PC-9 (cell line): ENCODE measurements at regions of chr15 and their contacts with region 1.

Region 1: DNA sequence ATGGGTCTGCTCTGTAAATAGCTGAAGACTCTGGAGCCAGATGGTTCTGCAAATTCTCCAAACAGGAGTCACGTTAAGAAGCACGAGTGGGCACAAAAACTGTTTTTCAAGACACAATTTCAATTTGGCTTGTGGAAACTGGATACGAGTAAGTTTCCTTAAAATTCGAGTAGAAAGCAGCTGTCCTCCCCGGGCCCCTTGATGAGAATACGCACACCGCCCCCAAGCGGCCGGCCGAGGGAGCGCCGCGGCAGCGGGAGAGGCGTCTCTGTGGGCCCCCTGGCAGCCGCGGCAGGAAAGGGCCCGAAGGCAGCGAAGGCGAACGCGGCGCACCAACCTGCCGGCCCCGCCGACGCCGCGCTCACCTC is 778 bp upstream of the THBS1 start:
- DNase-seq: peak; percentile 60 to 94
- H3K4me3 ChIP-seq: peak overlapping the region; percentile 70
- H3K27ac ChIP-seq: peak overlapping the region; percentile 62
- H3K4me1 ChIP-seq: peaks cover 22% of the 10 kb centered on the region; the same call in 1 of the 2 replicates
- H3K27me3 ChIP-seq: no peaks in the 10 kb centered on the region
- CTCF ChIP-seq: peak; percentile 86

Region 2: GRCh38 chr15:38707802-38708671 is 872.1 kb before region 1 on chr15:
- CTCF ChIA-PET with region 1: interaction called, 3 read pairs
- POLR2A ChIA-PET with region 1: interaction called, 4 read pairs
- intact Hi-C with region 1: loop called (anchors 1 kb)
- DNase-seq: peak in 1 of 2 experiments; percentile 43
- H3K4me3 ChIP-seq: no peak overlapping the region
- H3K27ac ChIP-seq: no peak overlapping the region
- H3K4me1 ChIP-seq: peaks cover 3% of the 10 kb centered on the region
- H3K27me3 ChIP-seq: no peaks in the 10 kb centered on the region
- CTCF ChIP-seq: peak; percentile 77

Region 3: GRCh38 chr15:38996111-38996631 is 583.9 kb before region 1 on chr15:
- CTCF ChIA-PET with region 1: no interaction called
- POLR2A ChIA-PET with region 1: interaction called, 6 read pairs
- intact Hi-C with region 1: loop called (anchors 5 kb)
- DNase-seq: no peak
- H3K4me3 ChIP-seq: no peak overlapping the region
- H3K27ac ChIP-seq: no peak overlapping the region
- H3K4me1 ChIP-seq: no peaks in the 10 kb centered on the region
- H3K27me3 ChIP-seq: no peaks in the 10 kb centered on the region
- CTCF ChIP-seq: no peak

Region 4: DNA sequence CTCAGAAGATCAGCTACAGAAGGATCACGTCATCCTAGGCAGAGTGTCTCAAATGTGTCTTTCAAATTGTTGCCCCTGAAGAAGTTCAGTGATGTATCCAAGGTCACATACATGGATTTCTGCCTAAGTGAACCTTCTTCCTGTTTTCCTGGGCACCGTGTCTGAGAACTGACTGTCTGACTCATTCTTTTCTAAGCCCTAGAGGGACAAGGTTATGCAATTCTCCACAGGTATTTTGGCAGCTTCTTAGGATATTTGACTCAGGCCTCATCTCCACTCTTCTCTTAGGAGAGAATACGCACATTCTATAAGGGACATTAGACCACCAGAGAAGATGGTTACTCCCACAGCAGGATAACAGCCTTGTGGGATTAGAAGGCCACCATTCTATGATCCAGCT is 391.2 kb before region 1 on chr15:
- CTCF ChIA-PET with region 1: no interaction called
- POLR2A ChIA-PET with region 1: interaction called, 12 read pairs
- intact Hi-C with region 1: loop called (anchors 1 kb)
- DNase-seq: peak; percentile 36 to 85
- H3K4me3 ChIP-seq: no peak overlapping the region
- H3K27ac ChIP-seq: peak overlapping the region; percentile 52
- H3K4me1 ChIP-seq: peaks cover 35% of the 10 kb centered on the region
- H3K27me3 ChIP-seq: no peaks in the 10 kb centered on the region
- CTCF ChIP-seq: no peak

Region 5: DNA sequence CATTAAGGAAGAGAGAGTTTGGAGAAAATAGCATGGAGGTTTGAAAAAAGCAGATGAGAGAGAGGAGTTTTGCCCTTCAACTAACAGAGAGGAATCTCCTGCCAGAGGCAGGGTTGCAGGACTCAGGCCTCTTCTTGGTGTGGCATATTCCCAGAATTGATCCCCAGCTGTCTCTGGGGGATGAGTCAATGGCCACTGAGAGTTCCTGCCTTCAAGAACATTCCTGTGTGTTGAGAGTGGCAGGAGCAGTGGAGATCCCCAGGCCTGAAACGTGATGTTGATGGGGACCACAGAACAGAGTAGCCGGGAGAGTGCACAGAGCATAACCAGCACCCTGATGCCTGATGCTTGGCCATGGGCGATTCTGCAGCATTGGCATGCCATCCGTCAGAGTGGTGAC is 347.6 kb before region 1 on chr15:
- CTCF ChIA-PET with region 1: interaction called, 4 read pairs
- POLR2A ChIA-PET with region 1: interaction called, 12 read pairs
- intact Hi-C with region 1: loop called (anchors 1 kb)
- DNase-seq: peak in 1 of 2 experiments; percentile 44
- H3K4me3 ChIP-seq: no peak overlapping the region
- H3K27ac ChIP-seq: no peak overlapping the region
- H3K4me1 ChIP-seq: peaks cover 27% of the 10 kb centered on the region
- H3K27me3 ChIP-seq: no peaks in the 10 kb centered on the region
- CTCF ChIP-seq: no peak

Region 6: GRCh38 chr15:39391230-39391629 is 188.9 kb before region 1 on chr15:
- CTCF ChIA-PET with region 1: no interaction called
- POLR2A ChIA-PET with region 1: interaction called, 5 read pairs
- intact Hi-C with region 1: loop called (anchors 2 kb)
- DNase-seq: peak; percentile 62 to 77
- H3K4me3 ChIP-seq: no peak overlapping the region
- H3K27ac ChIP-seq: no peak overlapping the region
- H3K4me1 ChIP-seq: peaks cover 36% of the 10 kb centered on the region
- H3K27me3 ChIP-seq: no peaks in the 10 kb centered on the region
- CTCF ChIP-seq: no peak

Region 7: GRCh38 chr15:39756806-39757522 is 176.9 kb after region 1 on chr15:
- CTCF ChIA-PET with region 1: interaction called, 12 read pairs
- POLR2A ChIA-PET with region 1: interaction called, 4 read pairs
- intact Hi-C with region 1: loop called (anchors 5 kb)
- DNase-seq: peak; percentile 7 to 35
- H3K4me3 ChIP-seq: no peak overlapping the region
- H3K27ac ChIP-seq: no peak overlapping the region
- H3K4me1 ChIP-seq: no peaks in the 10 kb centered on the region
- H3K27me3 ChIP-seq: no peaks in the 10 kb centered on the region
- CTCF ChIP-seq: peak; percentile 76